GM13976 (cell line): ENCODE measurements at regions of chr17 and their contacts with region 1.

Region 1: DNA sequence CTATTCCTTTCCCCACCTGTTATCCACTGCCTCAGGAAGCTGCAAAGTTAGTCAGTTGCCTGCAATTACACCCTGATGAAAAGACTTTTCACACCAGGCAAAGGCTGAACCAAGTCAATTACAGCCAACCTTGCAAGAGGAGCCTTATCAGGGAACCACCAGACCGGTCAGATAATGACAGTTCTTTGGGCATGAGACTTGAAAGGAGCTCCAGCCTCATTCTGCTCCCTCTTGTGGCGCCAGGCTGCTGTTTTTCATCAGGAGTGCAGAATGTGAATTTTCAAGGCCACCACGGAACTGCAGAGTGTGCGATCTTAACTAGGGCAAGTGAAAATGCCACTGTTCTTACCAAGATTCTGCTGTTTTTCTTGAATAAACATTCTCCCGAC is 22.5 kb downstream of the DNAI2 start:
- DNase-seq: no peak
- CTCF ChIP-seq: peak; percentile 41

Region 2: GRCh38 chr17:74368092-74369081 is 71.8 kb after region 1 on chr17:
- in situ Hi-C with region 1: loop called (anchors 10 kb)
- DNase-seq: peak; percentile 87
- CTCF ChIP-seq: peak; percentile 90